CD4-positive, alpha-beta memory T cell (primary cell): ENCODE measurements at regions of chr22 and their contacts with region 1.

Region 1: DNA sequence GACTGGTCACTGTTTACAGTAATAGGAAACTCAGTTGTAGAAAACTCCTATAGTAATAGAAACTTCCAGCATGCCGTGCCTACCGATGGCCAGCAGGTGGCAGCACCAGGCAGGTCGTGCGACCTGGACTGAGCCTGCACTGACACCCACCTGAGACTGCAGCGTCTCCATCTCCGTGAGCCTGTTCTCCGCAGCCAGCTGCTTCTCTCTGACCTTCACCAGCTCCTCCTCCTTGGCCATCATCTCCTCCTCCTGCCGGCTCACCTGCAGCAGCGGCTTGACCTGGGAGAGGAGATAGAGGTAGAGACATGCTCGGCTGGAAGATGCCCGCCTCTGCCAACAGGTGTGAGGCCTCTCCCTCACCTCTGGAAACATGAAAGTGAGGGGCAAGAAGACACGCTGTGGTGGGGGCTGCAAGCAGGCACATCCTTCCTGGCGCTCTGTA is 48.5 kb downstream of the APOL1 start:
- DNase-seq: peak; percentile 80 to 83 (median 80)
- H3K4me3 ChIP-seq: no peak overlapping the region
- H3K4me3 Mint-ChIP-seq: peak overlapping the region in 1 of 8 donors; percentile 49
- H3K27ac ChIP-seq: peak overlapping the region; percentile 8
- H3K27ac Mint-ChIP-seq: peak overlapping the region; percentile 57 to 89 (median 81)
- H3K4me1 ChIP-seq: peaks cover 11% of the 10 kb centered on the region
- H3K4me1 Mint-ChIP-seq: peaks cover 5 to 24% (median 14%) of the 10 kb centered on the region in 4 donors
- H3K27me3 ChIP-seq: no peaks in the 10 kb centered on the region
- H3K27me3 Mint-ChIP-seq: no peaks in the 10 kb centered on the region

Region 2: GRCh38 chr22:36311386-36312358 is 10.3 kb after region 1 on chr22:
- CTCF ChIA-PET with region 1: interaction called, 43 read pairs
- POLR2A ChIA-PET with region 1: interaction called, 4 read pairs
- intact Hi-C with region 1: no loop called
- DNase-seq: peak in 1 of 5 donors; percentile 28
- H3K4me3 ChIP-seq: no peak overlapping the region
- H3K4me3 Mint-ChIP-seq: no peak overlapping the region
- H3K27ac ChIP-seq: no peak overlapping the region
- H3K27ac Mint-ChIP-seq: peak overlapping the region in 2 of 7 donors; percentile 24 to 30
- H3K4me1 ChIP-seq: no peaks in the 10 kb centered on the region
- H3K4me1 Mint-ChIP-seq: peaks cover 2 to 13% (median 2%) of the 10 kb centered on the region in 4 donors
- H3K27me3 ChIP-seq: no peaks in the 10 kb centered on the region
- H3K27me3 Mint-ChIP-seq: no peaks in the 10 kb centered on the region

Region 3: DNA sequence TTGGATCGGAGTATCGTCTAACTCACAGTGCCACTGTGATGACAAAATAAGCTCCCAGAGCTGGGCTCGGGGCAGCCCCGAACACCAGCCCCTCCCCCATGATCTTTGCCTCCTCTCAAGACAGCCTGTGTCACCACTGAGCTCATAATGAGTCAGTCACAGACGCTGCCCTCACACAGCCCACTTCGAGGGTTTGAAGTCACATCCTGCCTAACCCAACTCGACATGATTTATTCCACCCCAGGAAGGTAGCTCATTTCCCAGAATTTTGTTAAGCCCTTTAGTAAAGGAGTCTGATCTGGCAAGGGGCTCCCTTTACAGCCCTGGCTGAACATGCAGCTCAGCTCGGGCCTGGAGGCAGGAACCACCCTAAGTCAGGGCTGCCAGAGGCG is 63.6 kb after region 1 on chr22:
- CTCF ChIA-PET with region 1: interaction called, 16 read pairs
- POLR2A ChIA-PET with region 1: interaction called, 3 read pairs
- intact Hi-C with region 1: no loop called
- DNase-seq: peak; percentile 84 to 98 (median 88)
- H3K4me3 ChIP-seq: no peak overlapping the region
- H3K4me3 Mint-ChIP-seq: peak overlapping the region; percentile 69 to 92 (median 80)
- H3K27ac ChIP-seq: peak overlapping the region; percentile 91
- H3K27ac Mint-ChIP-seq: peak overlapping the region; percentile 92 to 100 (median 97)
- H3K4me1 ChIP-seq: peaks cover 100% of the 10 kb centered on the region
- H3K4me1 Mint-ChIP-seq: peaks cover 73 to 100% (median 88%) of the 10 kb centered on the region in 4 donors
- H3K27me3 ChIP-seq: no peaks in the 10 kb centered on the region
- H3K27me3 Mint-ChIP-seq: no peaks in the 10 kb centered on the region

Region 4: DNA sequence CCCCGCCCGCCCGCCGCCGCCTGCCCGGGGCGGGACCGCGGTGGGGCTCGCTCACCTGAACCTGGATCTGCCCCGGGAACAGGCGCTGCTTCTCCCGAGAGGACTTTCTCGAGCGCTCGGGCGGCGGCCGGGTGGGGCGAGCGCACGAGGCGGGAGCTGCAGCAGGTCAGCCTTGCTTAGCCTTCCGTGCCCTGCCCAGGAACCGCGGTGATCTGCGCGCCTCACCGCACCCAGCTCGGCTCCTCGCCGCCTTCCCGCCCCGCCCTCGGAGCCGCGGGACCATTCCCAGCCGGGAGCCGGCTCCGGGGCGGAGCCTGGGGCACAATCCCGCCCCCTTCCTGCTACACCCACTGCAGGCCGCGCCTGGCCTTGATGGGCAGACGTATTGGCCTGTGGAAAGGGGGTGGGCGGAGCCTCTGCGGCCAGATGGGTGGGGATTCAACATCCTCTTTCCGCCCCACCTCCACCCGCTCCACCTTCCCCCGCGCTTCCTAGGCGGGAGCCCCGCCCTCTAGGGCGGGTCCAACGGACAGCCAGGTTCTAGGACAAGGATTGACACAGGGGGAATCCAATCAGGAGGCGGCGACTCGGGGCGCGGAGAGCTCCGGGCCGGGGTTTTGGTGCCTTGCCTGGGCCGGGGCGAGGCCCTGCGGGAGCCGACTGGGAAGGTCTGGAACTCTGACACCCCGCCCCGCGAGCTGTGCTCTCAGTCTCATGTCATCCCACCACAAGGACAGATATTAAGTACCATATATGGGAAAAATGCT is 86.5 kb after region 1 on chr22 and contains the start of gene MYH9:
- CTCF ChIA-PET with region 1: interaction called, 14 read pairs
- POLR2A ChIA-PET with region 1: interaction called, 6 read pairs
- intact Hi-C with region 1: loop called (anchors 1 kb)
- DNase-seq: peak; percentile 99
- H3K4me3 ChIP-seq: peak within 1 kb of the TSS; percentile 88 to 92
- H3K4me3 Mint-ChIP-seq: peak within 1 kb of the TSS; percentile 88 to 98 (median 94)
- H3K27ac ChIP-seq: peak within 1 kb of the TSS; percentile 80
- H3K27ac Mint-ChIP-seq: peak within 1 kb of the TSS; percentile 84 to 99 (median 97)
- H3K4me1 ChIP-seq: peaks cover 28% of the 10 kb centered on the region
- H3K4me1 Mint-ChIP-seq: peaks cover 12 to 45% (median 26%) of the 10 kb centered on the region in 4 donors
- H3K27me3 ChIP-seq: no peaks in the 10 kb centered on the region
- H3K27me3 Mint-ChIP-seq: no peaks in the 10 kb centered on the region
- total RNA-seq, gene MYH9: 717 to 734 TPM

Region 5: DNA sequence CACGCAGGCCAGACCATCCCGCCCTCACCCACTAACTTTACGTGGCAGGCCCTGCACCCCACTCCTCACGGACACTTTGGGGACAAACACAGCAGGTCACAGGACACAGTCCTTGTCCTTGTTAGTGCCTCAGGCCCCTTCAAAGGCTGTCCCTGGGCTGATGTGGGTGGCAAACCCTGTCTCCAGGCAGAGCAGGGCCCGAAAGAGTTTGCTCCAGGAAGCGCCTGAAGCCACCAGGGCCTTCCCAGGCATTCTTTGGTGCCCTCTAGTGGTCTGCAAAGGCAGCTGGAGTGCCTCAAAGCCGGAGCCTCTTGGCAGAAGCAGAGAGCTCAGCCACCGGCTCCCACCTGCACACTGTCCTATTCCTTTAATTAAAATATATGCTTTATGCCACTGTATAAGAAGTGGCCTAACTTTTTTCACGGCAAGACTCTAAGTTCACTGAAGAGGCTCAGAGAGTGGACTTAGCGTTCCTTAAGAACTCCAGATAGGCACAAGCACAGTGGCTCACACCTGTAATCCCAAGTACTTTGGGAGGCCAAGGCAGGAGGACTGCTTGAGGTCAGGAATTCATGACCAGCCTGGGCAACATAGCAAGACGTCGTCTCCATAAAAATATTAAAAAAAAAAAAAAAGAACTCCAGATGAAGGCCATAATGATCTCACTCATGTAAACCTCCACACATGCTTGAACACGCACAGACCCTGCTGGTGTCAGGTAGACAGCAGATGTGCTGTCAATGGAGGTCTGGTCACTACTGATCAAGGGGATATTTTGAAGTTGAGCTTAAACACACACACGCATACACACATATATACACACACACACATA is 169.0 kb after region 1 on chr22:
- CTCF ChIA-PET with region 1: interaction called, 204 read pairs
- POLR2A ChIA-PET with region 1: interaction called, 22 read pairs
- intact Hi-C with region 1: loop called (anchors 1 kb)
- DNase-seq: peak; percentile 85 to 87 (median 87)
- H3K4me3 ChIP-seq: no peak overlapping the region
- H3K4me3 Mint-ChIP-seq: no peak overlapping the region
- H3K27ac ChIP-seq: no peak overlapping the region
- H3K27ac Mint-ChIP-seq: peak overlapping the region; percentile 30 to 92 (median 79)
- H3K4me1 ChIP-seq: peaks cover 18% of the 10 kb centered on the region
- H3K4me1 Mint-ChIP-seq: peaks cover 11 to 28% (median 15%) of the 10 kb centered on the region in 4 donors
- H3K27me3 ChIP-seq: no peaks in the 10 kb centered on the region
- H3K27me3 Mint-ChIP-seq: no peaks in the 10 kb centered on the region